PC-9 (cell line): ENCODE measurements at regions of chr3 and their contacts with region 1.

Region 1: DNA sequence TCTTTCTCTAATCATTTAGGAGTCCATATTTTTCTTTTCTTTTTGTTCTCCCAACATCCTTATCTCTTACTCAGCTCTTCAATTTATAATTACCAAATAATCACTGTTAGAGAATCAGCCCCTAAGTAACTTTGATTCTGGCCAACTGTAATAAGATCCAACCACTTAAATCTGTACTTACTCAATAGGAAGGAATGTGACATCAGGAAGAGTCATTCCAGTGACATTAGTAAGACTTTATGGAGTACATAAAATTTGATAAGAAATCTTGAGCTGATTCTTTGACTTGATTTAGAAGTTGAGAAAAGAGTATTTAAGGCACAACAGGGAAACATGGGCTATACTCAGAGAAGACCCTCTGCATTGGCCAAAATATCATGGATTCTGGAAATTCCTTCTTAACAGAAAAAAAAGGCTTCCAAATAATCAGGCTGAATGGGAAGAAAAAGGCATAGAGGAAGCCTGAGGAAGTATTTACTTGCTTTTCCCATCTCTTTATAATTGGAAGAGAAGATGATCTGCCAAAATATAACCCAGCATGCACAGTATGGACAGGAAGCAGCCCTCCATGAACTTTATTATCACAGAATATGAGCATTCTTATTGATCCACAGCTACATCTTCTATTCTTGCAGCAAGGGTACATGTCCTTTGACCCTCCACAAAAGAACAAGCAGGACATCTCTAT is 289.7 kb upstream of the TPRG1 start:
- DNase-seq: peak in 1 of 2 experiments; percentile 96
- H3K4me3 ChIP-seq: no peak overlapping the region
- H3K27ac ChIP-seq: peak overlapping the region; percentile 57
- H3K4me1 ChIP-seq: peaks cover 25% of the 10 kb centered on the region
- H3K27me3 ChIP-seq: no peaks in the 10 kb centered on the region
- CTCF ChIP-seq: no peak

Region 2: GRCh38 chr3:188607805-188608315 is 274.2 kb before region 1 on chr3:
- CTCF ChIA-PET with region 1: no interaction called
- POLR2A ChIA-PET with region 1: no interaction called
- intact Hi-C with region 1: no loop called
- DNase-seq: no peak
- H3K4me3 ChIP-seq: no peak overlapping the region
- H3K27ac ChIP-seq: no peak overlapping the region
- H3K4me1 ChIP-seq: no peaks in the 10 kb centered on the region
- H3K27me3 ChIP-seq: no peaks in the 10 kb centered on the region
- CTCF ChIP-seq: no peak

Region 3: GRCh38 chr3:188819939-188820338 is 62.2 kb before region 1 on chr3:
- CTCF ChIA-PET with region 1: no interaction called
- POLR2A ChIA-PET with region 1: no interaction called
- intact Hi-C with region 1: loop called (anchors 2 kb)
- DNase-seq: no peak
- H3K4me3 ChIP-seq: no peak overlapping the region
- H3K27ac ChIP-seq: no peak overlapping the region
- H3K4me1 ChIP-seq: peaks cover 33% of the 10 kb centered on the region
- H3K27me3 ChIP-seq: no peaks in the 10 kb centered on the region
- CTCF ChIP-seq: no peak